ENCODE measurements at regions of chr22 and their contacts with region 1.

Region 1: DNA sequence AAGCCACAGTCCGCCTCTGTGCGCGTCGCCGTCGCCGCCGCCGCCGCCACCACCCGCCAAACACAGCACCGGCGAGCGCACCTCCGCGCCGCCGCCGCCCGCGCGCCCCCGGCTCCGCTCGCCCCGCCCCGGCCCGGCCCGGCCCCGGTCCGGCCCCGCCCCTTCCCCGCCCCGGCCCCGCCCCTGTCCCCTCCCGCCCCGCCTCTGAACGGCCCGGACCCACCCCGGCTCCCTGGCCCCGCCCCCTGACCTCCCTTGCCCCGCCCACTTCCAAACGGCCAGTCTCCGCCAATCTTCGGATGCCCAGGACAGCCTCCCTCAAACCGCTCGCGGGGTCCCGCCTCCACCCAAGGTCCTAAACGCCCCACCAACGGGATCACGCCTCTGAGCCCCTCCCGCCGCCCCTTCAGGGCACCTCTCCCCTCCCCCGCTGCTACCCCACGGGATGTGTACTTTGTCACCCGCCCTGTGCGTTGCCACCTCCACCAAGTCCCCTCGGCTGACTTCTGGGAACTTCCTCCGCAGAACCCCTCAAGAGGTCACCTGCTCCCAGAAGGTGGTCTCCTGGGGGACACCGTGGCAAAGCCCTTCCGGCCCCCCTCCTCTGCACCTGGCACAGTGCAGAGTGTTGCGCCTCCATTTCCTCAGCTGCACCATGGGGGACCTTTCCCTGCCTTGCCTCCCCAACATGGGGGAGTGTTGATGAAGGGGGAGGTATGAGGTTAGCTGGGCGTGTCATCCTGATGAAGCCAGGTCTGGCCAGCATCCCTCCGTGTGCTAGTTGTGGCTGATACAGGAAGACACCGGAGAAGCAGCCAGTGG is at the start of gene KIAA0930:
- DNase-seq: peak; percentile 68
- H3K4me3 Mint-ChIP-seq: peak within 1 kb of the TSS; percentile 93
- H3K27ac Mint-ChIP-seq: peak within 1 kb of the TSS; percentile 89
- H3K4me1 Mint-ChIP-seq: peaks cover 8% of the 10 kb centered on the region
- H3K27me3 Mint-ChIP-seq: no peaks in the 10 kb centered on the region
- total RNA-seq, gene KIAA0930: 45.5 and 48.7 TPM in 2 replicates

Region 2: DNA sequence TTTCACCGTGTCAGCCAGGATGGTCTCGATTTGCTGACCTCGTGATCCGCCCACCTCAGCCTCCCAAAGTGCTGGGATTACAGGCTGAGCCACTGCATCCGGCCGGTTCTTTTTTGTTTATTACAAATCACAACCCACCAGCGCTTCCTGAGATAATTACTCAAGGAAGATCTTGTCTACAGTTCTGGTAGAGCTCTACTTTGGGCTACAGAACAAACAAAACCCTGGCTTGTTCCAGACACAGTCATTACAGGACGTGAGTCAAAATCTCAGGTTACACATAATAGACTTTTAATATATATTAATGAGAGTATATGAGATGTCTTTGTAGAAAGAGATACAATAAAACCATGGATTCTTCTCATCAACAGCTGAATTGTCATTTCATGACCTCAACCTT is 120.1 kb before region 1 on chr22:
- intact Hi-C with region 1: no loop called
- DNase-seq: no peak
- H3K4me3 Mint-ChIP-seq: no peak overlapping the region
- H3K27ac Mint-ChIP-seq: no peak overlapping the region
- H3K4me1 Mint-ChIP-seq: no peaks in the 10 kb centered on the region
- H3K27me3 Mint-ChIP-seq: peaks cover 5% of the 10 kb centered on the region

Region 3: GRCh38 chr22:45218976-45219375 is 22.0 kb before region 1 on chr22:
- intact Hi-C with region 1: loop called (anchors 1 kb)
- DNase-seq: no peak
- H3K4me3 Mint-ChIP-seq: no peak overlapping the region
- H3K27ac Mint-ChIP-seq: peak overlapping the region; percentile 79
- H3K4me1 Mint-ChIP-seq: peaks cover 13% of the 10 kb centered on the region
- H3K27me3 Mint-ChIP-seq: no peaks in the 10 kb centered on the region

Region 4: GRCh38 chr22:45309472-45310227 is 68.6 kb after region 1 on chr22 and contains the start of gene FAM118A:
- intact Hi-C with region 1: loop called (anchors 2 kb)
- DNase-seq: peak; percentile 97
- H3K4me3 Mint-ChIP-seq: peak within 1 kb of the TSS; percentile 92
- H3K27ac Mint-ChIP-seq: peak within 1 kb of the TSS; percentile 93
- H3K4me1 Mint-ChIP-seq: peaks cover 44% of the 10 kb centered on the region
- H3K27me3 Mint-ChIP-seq: no peaks in the 10 kb centered on the region
- total RNA-seq, gene FAM118A: 30.7 and 38.6 TPM in 2 replicates

Region 5: GRCh38 chr22:45344334-45344733 is 103.3 kb after region 1 on chr22:
- intact Hi-C with region 1: no loop called
- DNase-seq: no peak
- H3K4me3 Mint-ChIP-seq: no peak overlapping the region
- H3K27ac Mint-ChIP-seq: no peak overlapping the region
- H3K4me1 Mint-ChIP-seq: peaks cover 15% of the 10 kb centered on the region
- H3K27me3 Mint-ChIP-seq: no peaks in the 10 kb centered on the region